Activated CD4-positive, alpha-beta T cell treated with anti-CD3 and anti-CD28 coated beads, Interleukin-2, amount 10 ng/mL, durations not matched to agents 24 days and 14 days (primary cell): ENCODE measurements at regions of chr20 and their contacts with region 1.

Region 1: DNA sequence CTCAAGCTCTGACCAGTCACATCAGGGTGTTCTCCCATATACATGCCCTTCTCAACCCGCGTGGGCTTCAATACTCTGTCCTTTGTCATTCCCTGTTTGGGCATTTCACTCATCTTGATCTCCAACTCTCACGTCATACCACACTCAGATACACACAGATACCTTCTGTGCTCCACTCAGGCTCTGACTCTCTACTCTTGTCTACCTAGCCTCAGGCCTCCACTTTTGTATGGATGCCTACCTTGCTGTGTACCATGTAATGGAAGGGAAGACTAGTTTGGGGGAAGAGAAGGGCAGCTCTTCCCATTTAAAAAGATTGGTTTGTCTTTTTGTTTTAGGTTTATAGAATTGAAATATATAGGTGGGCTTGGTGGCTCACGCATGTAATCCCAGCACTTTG is 48.6 kb downstream of the ASXL1 start:
- DNase-seq: no peak
- H3K4me3 Mint-ChIP-seq: no peak overlapping the region
- H3K27ac Mint-ChIP-seq: peak overlapping the region; percentile 1
- H3K4me1 Mint-ChIP-seq: peaks cover 22% of the 10 kb centered on the region
- H3K27me3 Mint-ChIP-seq: no peaks in the 10 kb centered on the region

Region 2: GRCh38 chr20:32249030-32249738 is 157.5 kb before region 1 on chr20:
- intact Hi-C with region 1: no loop called
- DNase-seq: peak; percentile 85
- H3K4me3 Mint-ChIP-seq: peak overlapping the region; percentile 56
- H3K27ac Mint-ChIP-seq: peak overlapping the region; percentile 90
- H3K4me1 Mint-ChIP-seq: peaks cover 49% of the 10 kb centered on the region
- H3K27me3 Mint-ChIP-seq: no peaks in the 10 kb centered on the region

Region 3: GRCh38 chr20:32357869-32358631 is 48.7 kb before region 1 on chr20 and contains the start of gene ASXL1:
- intact Hi-C with region 1: no loop called
- DNase-seq: peak; percentile 99
- H3K4me3 Mint-ChIP-seq: peak within 1 kb of the TSS; percentile 90
- H3K27ac Mint-ChIP-seq: peak within 1 kb of the TSS; percentile 100
- H3K4me1 Mint-ChIP-seq: peaks cover 53% of the 10 kb centered on the region
- H3K27me3 Mint-ChIP-seq: no peaks in the 10 kb centered on the region
- total RNA-seq, gene ASXL1: 126 and 142 TPM in 2 replicates

Region 4: GRCh38 chr20:32387252-32387651 is 19.4 kb before region 1 on chr20:
- intact Hi-C with region 1: loop called (anchors 1 kb)
- DNase-seq: peak; percentile 87
- H3K4me3 Mint-ChIP-seq: peak overlapping the region; percentile 39
- H3K27ac Mint-ChIP-seq: peak overlapping the region; percentile 13
- H3K4me1 Mint-ChIP-seq: peaks cover 34% of the 10 kb centered on the region
- H3K27me3 Mint-ChIP-seq: no peaks in the 10 kb centered on the region

Region 5: GRCh38 chr20:32564921-32565734 is 158.4 kb after region 1 on chr20:
- intact Hi-C with region 1: no loop called
- DNase-seq: no peak
- H3K4me3 Mint-ChIP-seq: no peak overlapping the region
- H3K27ac Mint-ChIP-seq: no peak overlapping the region
- H3K4me1 Mint-ChIP-seq: peaks cover 5% of the 10 kb centered on the region
- H3K27me3 Mint-ChIP-seq: no peaks in the 10 kb centered on the region

Region 6: GRCh38 chr20:32707691-32708581 is 301.2 kb after region 1 on chr20:
- intact Hi-C with region 1: no loop called
- DNase-seq: no peak
- H3K4me3 Mint-ChIP-seq: no peak overlapping the region
- H3K27ac Mint-ChIP-seq: peak overlapping the region; percentile 59
- H3K4me1 Mint-ChIP-seq: peaks cover 7% of the 10 kb centered on the region
- H3K27me3 Mint-ChIP-seq: no peaks in the 10 kb centered on the region